ENCODE measurements at regions of chr10 and their contacts with region 1.

Region 1: DNA sequence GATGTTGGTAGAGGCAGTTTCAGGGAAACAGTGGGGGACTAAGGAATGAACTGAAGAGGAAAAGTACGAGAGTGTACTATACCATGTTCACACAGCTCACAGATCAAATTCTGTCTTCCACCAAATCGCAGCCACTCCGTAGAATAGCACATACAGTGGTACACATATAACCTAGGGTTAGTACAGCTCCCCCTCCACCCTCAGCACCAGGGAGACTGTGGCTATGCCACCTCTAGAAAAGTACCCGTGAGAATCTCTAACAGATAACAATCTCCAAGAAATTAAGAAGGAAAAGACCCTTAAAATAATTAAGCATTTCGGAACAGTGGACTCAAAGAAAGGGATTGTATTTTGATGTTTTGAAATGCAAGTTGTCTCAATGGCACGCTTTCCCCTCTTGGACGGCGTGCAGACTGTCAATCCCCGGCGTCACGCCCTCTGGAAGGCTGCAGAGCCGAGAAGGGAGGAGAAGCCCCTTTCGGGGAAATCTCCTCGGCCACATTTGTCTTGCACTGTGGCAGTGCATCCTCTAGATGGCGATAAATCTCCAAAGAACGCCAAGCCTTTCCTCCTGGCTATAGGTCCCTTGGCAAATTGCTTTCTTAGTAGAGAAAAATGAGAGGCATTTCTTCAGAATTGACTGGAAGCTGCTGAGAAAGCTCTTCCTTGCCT is 345.0 kb downstream of the REEP3 start:
- DNase-seq: peak; percentile 71 to 80
- H3K4me3 ChIP-seq: no peak overlapping the region
- H3K4me3 Mint-ChIP-seq: peak overlapping the region; percentile 25
- H3K27ac Mint-ChIP-seq: no peak overlapping the region
- H3K4me1 ChIP-seq: peaks cover 7% of the 10 kb centered on the region; the same call in 1 of the 2 replicates
- H3K4me1 Mint-ChIP-seq: peaks cover 16% of the 10 kb centered on the region
- H3K27me3 ChIP-seq: peaks cover 2% of the 10 kb centered on the region
- H3K27me3 Mint-ChIP-seq: peaks cover 17% of the 10 kb centered on the region
- CTCF ChIP-seq: peak; percentile 87 to 96

Region 2: DNA sequence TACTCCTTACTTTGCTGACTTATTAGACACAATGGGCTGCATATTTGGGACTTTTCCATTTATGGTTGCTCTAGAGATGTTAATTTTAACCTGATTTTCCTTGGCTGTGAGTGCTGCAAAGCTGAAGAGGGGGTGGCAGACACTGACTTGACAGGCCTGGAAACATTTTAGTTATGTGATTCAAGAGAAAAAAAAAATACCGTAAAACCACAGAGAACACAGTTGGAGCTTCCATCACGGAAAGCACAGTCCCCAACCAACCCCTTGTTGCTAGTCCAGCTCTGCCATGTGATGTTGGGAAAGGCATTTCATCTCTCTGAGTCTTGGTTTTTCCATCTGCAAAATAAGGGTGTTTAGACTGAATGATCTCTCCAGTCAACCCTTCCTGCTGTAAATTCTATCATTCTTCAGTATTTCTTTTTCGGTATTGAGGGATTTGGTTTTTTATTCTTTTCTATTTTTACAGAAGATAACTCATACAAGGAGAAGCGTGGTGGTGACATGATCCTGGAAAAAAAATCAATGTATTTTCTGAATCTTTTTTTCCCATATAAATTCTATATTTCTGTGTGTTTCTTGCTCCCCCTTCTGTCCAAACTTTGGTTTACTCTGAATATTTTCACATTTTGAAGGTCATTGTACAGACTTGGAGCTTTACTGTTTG is 98.9 kb before region 1 on chr10:
- CTCF ChIA-PET with region 1: no interaction called
- POLR2A ChIA-PET with region 1: no interaction called
- intact Hi-C with region 1: no loop called
- DNase-seq: peak in 1 of 2 experiments; percentile 36
- H3K4me3 ChIP-seq: no peak overlapping the region
- H3K4me3 Mint-ChIP-seq: no peak overlapping the region
- H3K27ac Mint-ChIP-seq: no peak overlapping the region
- H3K4me1 ChIP-seq: peaks cover 20% of the 10 kb centered on the region
- H3K4me1 Mint-ChIP-seq: peaks cover 32% of the 10 kb centered on the region
- H3K27me3 ChIP-seq: no peaks in the 10 kb centered on the region
- H3K27me3 Mint-ChIP-seq: no peaks in the 10 kb centered on the region
- CTCF ChIP-seq: peak; percentile 51 to 65

Region 3: DNA sequence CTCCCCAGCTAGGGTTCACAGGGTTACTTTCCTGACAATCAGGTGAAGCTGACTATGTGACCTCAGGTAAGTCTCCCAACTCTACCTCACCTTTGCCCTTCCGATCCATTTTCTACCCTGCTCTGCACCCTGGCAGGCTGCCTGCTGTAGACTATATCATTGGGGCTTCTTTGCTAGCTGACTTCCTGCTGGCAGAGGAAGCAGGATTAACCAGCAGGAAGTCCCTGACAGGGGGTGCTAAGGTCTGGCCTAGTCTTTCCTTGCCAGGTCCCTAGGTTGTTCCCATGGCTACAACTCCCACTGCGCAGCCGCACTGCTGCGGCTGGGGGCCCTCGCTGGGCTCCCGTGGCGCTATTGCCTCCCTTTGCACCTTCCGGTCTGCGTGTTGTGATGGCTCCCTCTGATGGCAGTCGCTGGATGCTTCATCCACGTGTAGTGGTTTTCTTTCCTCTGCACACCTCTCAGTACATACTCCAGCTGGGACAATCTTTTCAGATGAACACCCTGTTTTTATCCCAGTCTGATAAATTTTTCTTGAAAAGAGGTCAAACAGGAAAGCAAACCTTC is 20.9 kb after region 1 on chr10:
- CTCF ChIA-PET with region 1: interaction called, 11 read pairs
- POLR2A ChIA-PET with region 1: no interaction called
- intact Hi-C with region 1: loop called (anchors 1 kb)
- DNase-seq: peak in 1 of 2 experiments; percentile 42
- H3K4me3 ChIP-seq: no peak overlapping the region
- H3K4me3 Mint-ChIP-seq: no peak overlapping the region
- H3K27ac Mint-ChIP-seq: no peak overlapping the region
- H3K4me1 ChIP-seq: no peaks in the 10 kb centered on the region
- H3K4me1 Mint-ChIP-seq: no peaks in the 10 kb centered on the region
- H3K27me3 ChIP-seq: no peaks in the 10 kb centered on the region
- H3K27me3 Mint-ChIP-seq: peaks cover 11% of the 10 kb centered on the region
- CTCF ChIP-seq: peak; percentile 31 to 37

Region 4: DNA sequence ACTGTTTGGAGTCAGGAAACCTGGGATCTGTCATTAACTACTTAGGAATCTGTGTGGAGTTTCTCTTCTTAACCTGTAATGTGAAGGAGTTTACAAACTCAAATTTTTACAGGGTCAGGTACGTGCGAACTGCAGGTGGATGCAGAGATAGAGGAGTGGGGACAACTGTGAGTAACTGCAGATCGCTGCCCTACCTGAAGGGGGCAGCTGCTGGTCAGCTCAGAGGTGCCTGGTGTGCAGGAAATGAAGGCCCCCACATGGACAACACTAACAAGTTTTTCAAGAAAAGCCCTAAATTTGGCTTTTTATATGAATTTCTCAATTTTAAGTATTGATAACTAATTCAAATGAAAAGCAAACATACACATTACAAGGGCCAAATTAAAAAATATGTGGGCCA is 35.0 kb after region 1 on chr10:
- CTCF ChIA-PET with region 1: interaction called, 5 read pairs
- POLR2A ChIA-PET with region 1: no interaction called
- intact Hi-C with region 1: loop called (anchors 2 kb)
- DNase-seq: peak in 1 of 2 experiments; percentile 49
- H3K4me3 ChIP-seq: no peak overlapping the region
- H3K4me3 Mint-ChIP-seq: no peak overlapping the region
- H3K27ac Mint-ChIP-seq: no peak overlapping the region
- H3K4me1 ChIP-seq: no peaks in the 10 kb centered on the region
- H3K4me1 Mint-ChIP-seq: no peaks in the 10 kb centered on the region
- H3K27me3 ChIP-seq: no peaks in the 10 kb centered on the region
- H3K27me3 Mint-ChIP-seq: peaks cover 7% of the 10 kb centered on the region
- CTCF ChIP-seq: peak; percentile 72 to 80

Region 5: GRCh38 chr10:63935705-63936104 is 69.5 kb after region 1 on chr10:
- CTCF ChIA-PET with region 1: interaction called, 4 read pairs
- POLR2A ChIA-PET with region 1: no interaction called
- intact Hi-C with region 1: loop called (anchors 2 kb)
- DNase-seq: peak in 1 of 2 experiments; percentile 24
- H3K4me3 ChIP-seq: no peak overlapping the region
- H3K4me3 Mint-ChIP-seq: no peak overlapping the region
- H3K27ac Mint-ChIP-seq: no peak overlapping the region
- H3K4me1 ChIP-seq: no peaks in the 10 kb centered on the region
- H3K4me1 Mint-ChIP-seq: no peaks in the 10 kb centered on the region
- H3K27me3 ChIP-seq: 0 out of 2 replicates have a peak, but pooled peaks cover 2% of the 10 kb centered on the region
- H3K27me3 Mint-ChIP-seq: peaks cover 10% of the 10 kb centered on the region
- CTCF ChIP-seq: peak; percentile 30 to 53

Region 6: GRCh38 chr10:63976538-63976937 is 110.3 kb after region 1 on chr10:
- CTCF ChIA-PET with region 1: interaction called, 38 read pairs
- POLR2A ChIA-PET with region 1: no interaction called
- intact Hi-C with region 1: loop called (anchors 1 kb)
- DNase-seq: peak; percentile 67 to 74
- H3K4me3 ChIP-seq: no peak overlapping the region
- H3K4me3 Mint-ChIP-seq: no peak overlapping the region
- H3K27ac Mint-ChIP-seq: no peak overlapping the region
- H3K4me1 ChIP-seq: no peaks in the 10 kb centered on the region
- H3K4me1 Mint-ChIP-seq: peaks cover 7% of the 10 kb centered on the region
- H3K27me3 ChIP-seq: no peaks in the 10 kb centered on the region
- H3K27me3 Mint-ChIP-seq: peaks cover 7% of the 10 kb centered on the region
- CTCF ChIP-seq: peak; percentile 88 to 90